ENCODE measurements at regions of chr19 and their contacts with region 1.

Region 1: DNA sequence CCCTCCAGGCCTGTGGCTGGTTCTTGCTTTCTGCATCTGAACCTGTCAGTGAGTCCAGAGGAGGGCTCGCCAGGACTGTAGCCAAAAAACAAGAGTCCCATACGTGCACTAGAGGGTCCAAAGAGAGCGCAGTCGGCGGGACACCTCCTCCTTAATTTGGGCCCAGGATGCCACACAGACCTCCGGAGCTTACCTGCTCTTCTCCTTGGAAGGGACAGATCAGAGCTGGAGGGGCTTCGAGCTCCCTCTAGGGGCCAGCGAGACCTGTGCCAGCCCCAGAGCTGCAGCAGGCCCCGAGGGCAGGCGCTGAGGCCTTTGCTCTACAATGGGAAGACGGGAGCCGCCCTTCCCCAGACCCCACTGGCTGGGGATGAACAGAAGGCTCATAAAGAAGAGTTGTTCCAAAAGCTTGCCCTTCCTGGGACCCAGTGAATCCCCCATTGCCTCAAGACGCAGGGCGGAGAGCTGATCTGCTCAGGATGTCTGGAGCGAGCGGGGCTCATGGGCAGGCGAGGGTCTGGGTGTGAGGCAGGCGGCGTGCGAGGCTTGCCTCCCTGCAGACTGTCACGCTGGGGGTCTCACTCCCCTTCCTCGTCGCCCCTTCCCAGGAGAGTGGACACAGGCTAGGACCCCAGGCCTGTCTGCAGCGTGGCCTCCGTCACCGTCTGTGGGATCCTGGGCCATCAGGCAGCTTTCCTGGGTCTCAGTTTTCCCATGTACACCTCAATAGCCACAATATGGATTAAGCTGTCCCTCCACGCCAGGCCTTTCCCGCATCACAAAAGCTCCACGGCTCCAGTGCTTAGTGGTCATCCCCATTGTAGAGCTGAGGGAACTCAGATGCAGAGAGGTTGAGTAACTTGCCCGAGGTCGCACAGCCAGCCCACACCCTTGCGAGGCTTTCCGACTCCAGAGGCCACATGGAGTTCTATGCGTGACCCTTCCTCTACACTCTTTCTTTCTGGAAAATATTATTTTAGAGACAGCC is 46.9 kb upstream of the VSTM2B start:
- DNase-seq: peak; percentile 40 to 61 (median 54)
- ATAC-seq: peak; percentile 99
- H3K4me3 ChIP-seq: no peak overlapping the region
- H3K27ac ChIP-seq: no peak overlapping the region
- H3K4me1 ChIP-seq: no peaks in the 10 kb centered on the region
- H3K27me3 ChIP-seq: peaks cover 0 to 17% of the 10 kb centered on the region in 2 experiments; a peak in 2 of 5 replicates
- CTCF ChIP-seq: peak; percentile 63 to 70 (median 68)
- EP300 ChIP-seq: no peak
- POLR2A ChIP-seq: no peak
- RAD21 ChIP-seq: peak in 1 of 2 experiments; percentile 47; a peak in 2 of 4 replicates

Region 2: GRCh38 chr19:29294343-29294811 is 184.5 kb before region 1 on chr19:
- CTCF ChIA-PET with region 1: no interaction called
- POLR2A ChIA-PET with region 1: no interaction called
- in situ Hi-C with region 1: no loop called
- intact Hi-C with region 1: loop called (anchors 10 kb)
- DNase-seq: no peak
- ATAC-seq: no peak
- H3K4me3 ChIP-seq: no peak overlapping the region
- H3K27ac ChIP-seq: no peak overlapping the region
- H3K4me1 ChIP-seq: no peaks in the 10 kb centered on the region
- H3K27me3 ChIP-seq: peaks cover 0 to 11% of the 10 kb centered on the region in 2 experiments; a peak in 1 of 5 replicates
- CTCF ChIP-seq: no peak
- EP300 ChIP-seq: no peak
- POLR2A ChIP-seq: no peak
- RAD21 ChIP-seq: no peak

Region 3: DNA sequence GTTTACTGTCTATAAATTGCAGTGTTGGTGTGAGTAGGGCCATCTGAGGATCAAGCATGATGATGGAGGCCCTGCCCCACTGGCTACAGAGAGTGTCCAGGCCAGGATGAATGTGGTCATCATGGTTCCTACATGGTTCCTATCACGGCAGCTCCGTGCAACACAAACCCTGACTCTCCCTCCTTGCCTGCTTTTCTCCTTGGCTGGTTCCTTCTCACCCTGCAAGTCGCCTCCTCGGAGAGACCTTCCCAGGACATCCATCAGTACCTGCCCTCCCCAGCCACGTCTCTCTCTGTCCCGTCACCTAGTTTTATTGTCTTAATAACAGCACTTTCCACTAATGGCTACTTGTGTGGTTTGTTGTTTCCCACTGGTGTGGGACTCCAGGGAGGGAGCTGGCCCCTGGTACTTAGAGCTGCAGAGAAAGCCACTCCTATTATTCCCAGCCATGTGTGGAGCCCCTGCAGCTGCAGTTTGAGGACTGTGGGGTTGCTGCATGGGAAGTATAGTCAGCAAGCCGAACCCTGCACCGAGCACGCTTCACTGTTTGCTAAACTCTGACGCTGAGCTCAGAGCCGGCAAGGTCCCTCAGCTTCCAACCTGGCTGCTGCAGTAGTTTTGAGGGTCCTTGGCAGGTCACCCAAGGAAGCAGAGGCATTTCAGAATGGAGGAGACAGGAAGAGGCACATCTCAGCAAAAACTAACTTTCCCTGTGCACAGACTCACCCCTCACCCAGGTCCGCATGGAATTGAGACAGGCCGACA is 99.4 kb before region 1 on chr19:
- CTCF ChIA-PET with region 1: no interaction called
- POLR2A ChIA-PET with region 1: no interaction called
- in situ Hi-C with region 1: no loop called
- intact Hi-C with region 1: no loop called
- DNase-seq: no peak
- ATAC-seq: no peak
- H3K4me3 ChIP-seq: no peak overlapping the region
- H3K27ac ChIP-seq: no peak overlapping the region
- H3K4me1 ChIP-seq: no peaks in the 10 kb centered on the region
- H3K27me3 ChIP-seq: peaks cover 6 to 16% of the 10 kb centered on the region in 2 experiments; a peak in 3 of 5 replicates
- CTCF ChIP-seq: no peak
- EP300 ChIP-seq: no peak
- POLR2A ChIP-seq: no peak
- RAD21 ChIP-seq: no peak

Region 4: DNA sequence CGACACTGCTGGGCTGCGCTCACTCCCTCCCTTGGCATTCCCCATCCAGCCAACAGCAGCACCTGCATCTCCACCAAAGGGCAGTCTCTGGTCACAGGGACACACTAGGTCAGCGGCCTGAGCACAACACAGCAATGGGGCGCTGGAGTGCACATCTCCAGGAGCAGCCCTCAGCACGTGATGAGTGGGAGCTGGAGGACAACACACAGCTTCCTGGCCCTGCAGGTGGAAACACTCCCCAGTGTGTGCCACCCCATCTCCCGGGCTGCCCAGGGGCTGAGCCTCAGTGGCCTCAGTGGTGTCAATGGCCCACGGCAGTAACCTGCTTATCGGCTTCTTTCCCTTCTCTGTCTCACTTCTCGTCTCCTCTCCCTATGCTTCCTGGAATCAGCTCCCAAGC is 49.9 kb before region 1 on chr19:
- CTCF ChIA-PET with region 1: no interaction called
- POLR2A ChIA-PET with region 1: no interaction called
- in situ Hi-C with region 1: no loop called
- intact Hi-C with region 1: no loop called
- DNase-seq: no peak
- ATAC-seq: no peak
- H3K4me3 ChIP-seq: no peak overlapping the region
- H3K27ac ChIP-seq: no peak overlapping the region
- H3K4me1 ChIP-seq: no peaks in the 10 kb centered on the region
- H3K27me3 ChIP-seq: peaks cover 0 to 13% of the 10 kb centered on the region in 2 experiments; a peak in 2 of 5 replicates
- CTCF ChIP-seq: no peak
- EP300 ChIP-seq: no peak
- POLR2A ChIP-seq: no peak
- RAD21 ChIP-seq: no peak

Region 5: GRCh38 chr19:29453596-29453995 is 25.3 kb before region 1 on chr19:
- CTCF ChIA-PET with region 1: no interaction called
- POLR2A ChIA-PET with region 1: no interaction called
- in situ Hi-C with region 1: no loop called
- intact Hi-C with region 1: no loop called
- DNase-seq: no peak
- ATAC-seq: peak; percentile 40; the same call in 1 of the 3 replicates
- H3K4me3 ChIP-seq: no peak overlapping the region
- H3K27ac ChIP-seq: no peak overlapping the region
- H3K4me1 ChIP-seq: no peaks in the 10 kb centered on the region
- H3K27me3 ChIP-seq: peaks cover 0 to 7% of the 10 kb centered on the region in 2 experiments; a peak in 1 of 5 replicates
- CTCF ChIP-seq: no peak
- EP300 ChIP-seq: no peak
- POLR2A ChIP-seq: no peak
- RAD21 ChIP-seq: no peak

Measured in K562 (cell line).